ENCODE measurements at regions of chr2 and their contacts with region 1.

Region 1: GRCh38 chr2:100013892-100014677 is 128.3 kb downstream of the AFF3 start:
- DNase-seq: no peak
- ATAC-seq: no peak
- H3K4me3 ChIP-seq: no peak overlapping the region
- H3K27ac ChIP-seq: no peak overlapping the region
- H3K4me1 ChIP-seq: no peaks in the 10 kb centered on the region
- H3K27me3 ChIP-seq: no peaks in the 10 kb centered on the region
- CTCF ChIP-seq: no peak
- EP300 ChIP-seq: no peak
- POLR2A ChIP-seq: no peak
- RAD21 ChIP-seq: no peak

Region 2: GRCh38 chr2:99998651-99999320 is 15.3 kb before region 1 on chr2:
- CTCF ChIA-PET with region 1: no interaction called
- POLR2A ChIA-PET with region 1: no interaction called
- RAD21 ChIA-PET with region 1: no interaction called
- SMC1A ChIA-PET with region 1: no interaction called
- in situ Hi-C with region 1: no loop called
- intact Hi-C with region 1: loop called (anchors 1 kb)
- DNase-seq: no peak
- ATAC-seq: no peak
- H3K4me3 ChIP-seq: no peak overlapping the region
- H3K27ac ChIP-seq: no peak overlapping the region
- H3K4me1 ChIP-seq: no peaks in the 10 kb centered on the region; the same call in 1 of the 2 replicates
- H3K27me3 ChIP-seq: no peaks in the 10 kb centered on the region
- CTCF ChIP-seq: no peak
- EP300 ChIP-seq: no peak
- POLR2A ChIP-seq: no peak
- RAD21 ChIP-seq: no peak